Activated CD4-positive, alpha-beta T cell treated with anti-CD3 and anti-CD28 coated beads for 36 hours (primary cell): ENCODE measurements at regions of chrX and their contacts with region 1.

Region 1: DNA sequence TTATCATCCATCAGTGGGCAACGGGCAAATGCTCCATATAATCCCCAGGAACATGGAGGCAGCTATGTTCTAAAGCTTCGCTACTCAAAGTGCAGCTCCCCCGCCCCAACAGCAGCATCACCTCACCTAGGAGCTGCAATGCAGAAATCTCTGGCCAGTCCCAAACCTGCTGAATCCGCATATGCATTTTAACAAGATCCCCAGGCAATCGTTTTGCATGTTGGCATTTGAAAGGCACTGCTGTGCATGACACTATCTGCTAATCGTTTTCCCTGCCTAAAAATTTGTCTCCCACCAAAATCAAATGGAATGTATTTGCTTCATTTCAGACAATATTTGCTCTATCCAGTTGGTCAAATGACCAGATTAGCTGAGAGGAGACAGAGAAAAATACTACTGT is 15.2 kb downstream of the ADGRG2 start:
- DNase-seq: no peak
- ATAC-seq: no peak
- H3K4me3 Mint-ChIP-seq: no peak overlapping the region
- H3K27ac Mint-ChIP-seq: no peak overlapping the region
- H3K4me1 Mint-ChIP-seq: no peaks in the 10 kb centered on the region
- H3K27me3 Mint-ChIP-seq: peaks cover 24% of the 10 kb centered on the region

Region 2: GRCh38 chrX:18973527-18974192 is 133.4 kb before region 1 on chrX:
- CTCF ChIA-PET with region 1: no interaction called
- POLR2A ChIA-PET with region 1: interaction called, 21 read pairs
- intact Hi-C with region 1: no loop called
- DNase-seq: no peak
- ATAC-seq: no peak
- H3K4me3 Mint-ChIP-seq: no peak overlapping the region
- H3K27ac Mint-ChIP-seq: no peak overlapping the region
- H3K4me1 Mint-ChIP-seq: no peaks in the 10 kb centered on the region
- H3K27me3 Mint-ChIP-seq: no peaks in the 10 kb centered on the region

Region 3: DNA sequence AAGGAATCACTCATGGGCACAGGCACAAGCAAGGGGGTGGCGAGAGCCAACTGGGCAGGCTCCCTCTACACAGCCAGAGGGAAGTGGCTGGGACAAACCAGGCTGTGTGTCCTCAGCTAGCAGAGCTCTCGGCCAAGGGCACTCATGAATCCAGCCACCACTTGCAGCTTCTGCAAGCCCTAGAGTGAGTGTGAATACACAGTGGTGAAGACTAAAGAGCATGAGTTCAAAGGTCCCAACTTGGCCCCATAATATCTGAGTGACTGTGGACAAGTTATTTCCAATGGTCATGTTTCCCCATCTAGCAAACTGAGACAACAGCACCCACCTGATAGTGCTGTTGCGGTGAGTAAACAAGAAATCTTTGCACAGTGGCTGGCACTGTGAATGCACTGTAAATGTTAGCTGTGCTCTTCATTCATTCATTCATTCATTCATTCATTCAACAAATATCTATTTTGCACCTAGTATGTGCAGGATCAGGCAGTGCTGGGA is 36.4 kb before region 1 on chrX:
- CTCF ChIA-PET with region 1: no interaction called
- POLR2A ChIA-PET with region 1: no interaction called
- intact Hi-C with region 1: no loop called
- DNase-seq: no peak
- ATAC-seq: no peak
- H3K4me3 Mint-ChIP-seq: no peak overlapping the region
- H3K27ac Mint-ChIP-seq: no peak overlapping the region
- H3K4me1 Mint-ChIP-seq: no peaks in the 10 kb centered on the region
- H3K27me3 Mint-ChIP-seq: no peaks in the 10 kb centered on the region